ENCODE measurements at regions of chr21 and their contacts with region 1.

Region 1: DNA sequence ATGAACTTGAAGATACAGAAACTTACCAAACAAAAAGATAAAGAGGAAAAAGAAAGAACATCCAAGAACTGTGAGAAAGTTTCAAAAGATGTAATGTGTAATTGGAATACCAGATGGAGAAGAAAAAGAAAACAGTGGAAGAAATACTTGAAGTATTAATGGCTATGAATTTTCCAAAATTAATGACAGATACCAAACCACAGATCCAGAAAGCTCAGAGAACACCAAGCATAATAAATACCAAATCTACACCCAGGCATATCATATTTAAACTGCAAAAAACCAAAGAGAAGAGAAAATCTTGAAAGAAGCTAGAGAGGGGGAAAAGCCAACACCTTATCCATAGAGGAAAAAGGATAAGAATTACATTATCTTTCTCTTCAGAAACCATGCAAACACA is 136.4 kb downstream of the CLIC6 start:
- DNase-seq: no peak
- ATAC-seq: no peak
- H3K4me3 ChIP-seq: no peak overlapping the region
- H3K27ac ChIP-seq: no peak overlapping the region
- H3K4me1 ChIP-seq: peaks cover 7% of the 10 kb centered on the region; the same call in 1 of the 2 replicates
- H3K27me3 ChIP-seq: no peaks in the 10 kb centered on the region
- CTCF ChIP-seq: no peak

Region 2: DNA sequence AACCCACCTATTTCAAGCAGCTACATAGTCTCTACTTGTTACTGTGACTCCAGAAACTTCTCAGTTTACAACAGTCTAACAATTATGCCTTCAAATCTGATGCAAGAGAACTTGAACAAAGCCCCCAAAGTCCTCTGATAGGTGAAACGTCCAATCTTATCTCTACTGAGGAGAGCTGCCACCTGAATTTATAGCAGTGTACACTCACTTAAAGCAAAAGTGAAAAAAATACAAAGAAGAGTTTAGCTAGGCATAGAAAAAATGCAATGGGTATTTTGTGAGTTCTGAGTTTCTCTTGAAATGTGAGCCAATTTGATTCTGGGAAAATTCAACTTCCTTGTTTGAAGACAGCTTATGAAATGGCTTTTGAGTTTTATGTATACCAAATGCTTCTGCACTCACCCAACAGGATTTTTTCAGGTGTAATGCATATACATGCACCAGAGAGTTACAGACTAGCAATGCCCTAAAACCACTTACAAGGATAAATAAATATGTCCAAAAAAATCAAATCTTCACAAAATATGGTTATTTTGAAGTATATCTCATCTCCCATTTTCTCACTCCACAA is 154.2 kb before region 1 on chr21:
- CTCF ChIA-PET with region 1: no interaction called
- POLR2A ChIA-PET with region 1: interaction called, 12 read pairs
- in situ Hi-C with region 1: no loop called
- intact Hi-C with region 1: no loop called
- DNase-seq: no peak
- ATAC-seq: no peak
- H3K4me3 ChIP-seq: no peak overlapping the region
- H3K27ac ChIP-seq: no peak overlapping the region
- H3K4me1 ChIP-seq: no peaks in the 10 kb centered on the region
- H3K27me3 ChIP-seq: peaks cover 5% of the 10 kb centered on the region
- CTCF ChIP-seq: no peak